ENCODE measurements at regions of chr10 and their contacts with region 1.

Region 1: GRCh38 chr10:17910125-17910789 is 41.5 kb upstream of the SLC39A12 start:
- DNase-seq: peak; percentile 74
- H3K4me3 Mint-ChIP-seq: no peak overlapping the region
- H3K27ac Mint-ChIP-seq: no peak overlapping the region
- H3K4me1 Mint-ChIP-seq: peaks cover 19% of the 10 kb centered on the region
- H3K27me3 Mint-ChIP-seq: no peaks in the 10 kb centered on the region
- CTCF ChIP-seq: peak; percentile 54

Region 2: DNA sequence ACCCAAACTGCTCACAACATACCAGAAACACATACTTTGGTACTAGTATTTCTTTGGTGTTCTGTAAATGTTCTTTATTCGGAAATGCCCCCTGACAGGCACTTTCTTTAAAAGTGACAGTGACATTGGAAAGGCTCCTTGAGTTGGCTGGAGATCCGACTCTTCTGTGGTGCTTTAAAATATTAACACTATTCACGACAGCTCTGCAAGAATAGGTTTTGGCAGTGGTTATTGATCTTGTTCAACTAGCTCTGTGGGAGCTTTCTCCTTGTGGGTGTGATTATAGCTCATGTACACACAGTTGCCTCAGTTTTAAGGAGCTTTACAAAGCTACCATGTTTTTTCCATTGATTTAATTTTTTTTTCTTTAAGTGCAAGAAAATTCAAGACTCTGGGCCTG is 11.1 kb after region 1 on chr10:
- CTCF ChIA-PET with region 1: interaction called, 12 read pairs
- POLR2A ChIA-PET with region 1: interaction called, 3 read pairs
- intact Hi-C with region 1: no loop called
- DNase-seq: no peak
- H3K4me3 Mint-ChIP-seq: no peak overlapping the region
- H3K27ac Mint-ChIP-seq: no peak overlapping the region
- H3K4me1 Mint-ChIP-seq: peaks cover 9% of the 10 kb centered on the region
- H3K27me3 Mint-ChIP-seq: no peaks in the 10 kb centered on the region
- CTCF ChIP-seq: no peak

Region 3: GRCh38 chr10:18104223-18104872 is 194.1 kb after region 1 on chr10:
- CTCF ChIA-PET with region 1: interaction called, 13 read pairs
- POLR2A ChIA-PET with region 1: interaction called, 3 read pairs
- intact Hi-C with region 1: loop called (anchors 1 kb)
- DNase-seq: peak; percentile 65
- H3K4me3 Mint-ChIP-seq: no peak overlapping the region
- H3K27ac Mint-ChIP-seq: no peak overlapping the region
- H3K4me1 Mint-ChIP-seq: peaks cover 6% of the 10 kb centered on the region
- H3K27me3 Mint-ChIP-seq: no peaks in the 10 kb centered on the region
- CTCF ChIP-seq: peak; percentile 69

Region 4: DNA sequence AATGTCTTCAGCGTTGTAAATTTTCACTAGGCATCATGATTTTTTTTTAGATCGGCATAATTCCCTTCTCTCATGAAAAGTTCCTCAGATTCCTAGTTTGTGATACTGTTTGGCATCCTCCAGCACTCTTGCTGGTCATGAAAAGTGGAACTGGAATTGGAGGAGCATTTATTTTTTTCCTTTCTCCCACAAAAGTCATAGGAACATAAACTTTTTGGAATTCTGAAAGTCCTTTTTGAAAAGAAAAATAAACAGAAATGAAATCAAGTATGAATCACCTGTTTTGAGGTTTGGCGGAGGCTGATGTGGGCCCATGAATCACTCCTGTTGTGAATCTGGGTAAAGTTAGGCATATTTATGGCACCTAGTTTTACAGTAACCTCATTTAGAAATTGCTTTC is 247.6 kb after region 1 on chr10:
- CTCF ChIA-PET with region 1: no interaction called
- POLR2A ChIA-PET with region 1: no interaction called
- intact Hi-C with region 1: loop called (anchors 5 kb)
- DNase-seq: peak; percentile 85
- H3K4me3 Mint-ChIP-seq: peak overlapping the region; percentile 53
- H3K27ac Mint-ChIP-seq: peak overlapping the region; percentile 84
- H3K4me1 Mint-ChIP-seq: peaks cover 28% of the 10 kb centered on the region
- H3K27me3 Mint-ChIP-seq: no peaks in the 10 kb centered on the region
- CTCF ChIP-seq: no peak